Panc1 (cell line): ENCODE measurements at regions of chr16 and their contacts with region 1.

Region 1: DNA sequence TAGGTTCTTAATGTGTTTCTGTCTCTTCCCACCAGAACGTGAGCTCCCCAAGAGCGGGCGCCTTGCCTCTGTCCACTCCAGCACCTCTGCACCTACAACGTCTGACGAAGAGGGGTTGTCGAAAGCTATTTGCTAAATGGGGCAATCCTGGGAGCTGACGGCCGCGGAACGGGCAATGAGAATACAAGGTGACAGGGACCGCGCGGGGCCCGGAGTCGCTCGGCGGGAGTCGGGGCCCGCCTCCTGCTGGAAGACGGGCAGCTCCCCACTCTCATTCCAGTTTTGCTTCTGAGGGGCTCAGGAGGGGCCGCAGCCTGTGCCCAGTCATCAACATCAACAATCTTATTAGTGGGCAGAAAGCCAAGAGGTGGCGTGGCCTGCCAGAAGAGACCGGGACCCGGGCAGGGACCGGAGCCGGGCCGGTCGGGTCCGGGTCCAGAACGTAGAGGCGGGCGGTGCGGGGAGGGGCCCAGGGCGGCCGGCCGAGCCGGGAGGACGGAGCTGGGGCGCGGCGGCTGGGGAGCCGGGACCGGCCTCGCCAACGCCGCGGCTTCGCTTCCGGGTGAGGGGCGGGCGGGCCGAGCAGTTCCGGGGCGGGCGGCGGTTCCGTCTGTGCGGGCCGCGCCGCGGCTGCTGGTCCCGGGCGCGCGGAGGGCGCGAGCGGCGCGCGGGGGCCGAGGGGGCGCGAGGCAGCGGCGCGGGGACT is at the start of gene MOSMO:
- DNase-seq: no peak
- ATAC-seq: peak; percentile 95
- H3K4me3 ChIP-seq: peak within 1 kb of the TSS; percentile 87 to 89
- H3K27ac ChIP-seq: peak within 1 kb of the TSS; percentile 87
- H3K4me1 ChIP-seq: peaks cover 16% of the 10 kb centered on the region; the same call in 1 of the 2 replicates
- H3K27me3 ChIP-seq: no peaks in the 10 kb centered on the region
- CTCF ChIP-seq: no peak
- total RNA-seq, gene MOSMO: 20.6 TPM

Region 2: GRCh38 chr16:22077700-22078313 is 70.1 kb after region 1 on chr16:
- CTCF ChIA-PET with region 1: interaction called, 34 read pairs
- POLR2A ChIA-PET with region 1: interaction called, 8 read pairs
- in situ Hi-C with region 1: no loop called
- intact Hi-C with region 1: no loop called
- DNase-seq: no peak
- ATAC-seq: peak; percentile 85
- H3K4me3 ChIP-seq: no peak overlapping the region
- H3K27ac ChIP-seq: no peak overlapping the region
- H3K4me1 ChIP-seq: peaks cover 11% of the 10 kb centered on the region; the same call in 1 of the 2 replicates
- H3K27me3 ChIP-seq: no peaks in the 10 kb centered on the region
- CTCF ChIP-seq: peak; percentile 92